ENCODE measurements at regions of chr2 and their contacts with region 1.

Region 1: DNA sequence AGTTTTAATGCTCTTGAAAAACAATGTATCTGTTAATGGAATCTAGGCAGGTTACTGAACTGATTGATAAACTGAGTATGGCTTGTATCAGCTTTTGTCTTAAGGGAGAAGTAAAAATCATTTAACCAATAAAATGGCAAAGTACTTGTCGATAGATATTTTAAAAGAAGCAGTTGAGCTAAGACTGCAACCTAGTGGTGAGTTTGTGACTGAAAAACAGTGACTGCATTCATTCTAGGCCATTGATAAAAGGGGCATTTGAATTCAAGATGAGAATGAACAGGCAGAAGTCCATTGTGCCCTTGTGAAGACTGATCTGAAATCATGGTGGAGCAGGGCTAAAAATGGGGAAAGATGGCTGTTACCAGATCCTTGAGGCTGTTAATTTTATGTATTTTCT is 59.4 kb upstream of the MSTN start:
- DNase-seq: peak; percentile 26
- CTCF ChIP-seq: peak; percentile 37

Region 2: DNA sequence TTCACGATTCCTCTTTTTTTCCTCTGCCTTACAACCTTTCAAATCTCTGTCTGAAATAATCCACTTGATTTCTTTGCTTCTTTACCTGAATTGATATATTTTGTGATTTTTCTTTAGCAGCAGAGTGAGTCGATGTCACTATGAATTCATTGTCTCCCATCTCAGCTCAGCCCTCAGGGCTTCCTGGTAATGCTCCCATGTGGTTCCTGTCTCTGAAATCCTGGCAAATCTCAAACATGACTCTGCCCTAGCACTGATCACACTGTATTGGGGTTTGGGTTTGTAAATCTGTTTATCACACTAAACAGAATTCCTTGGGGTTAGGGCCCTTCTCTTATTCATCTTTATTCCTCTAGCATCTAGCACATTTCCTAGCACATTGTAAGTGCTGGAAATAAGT is 16.4 kb before region 1 on chr2:
- CTCF ChIA-PET with region 1: no interaction called
- POLR2A ChIA-PET with region 1: no interaction called
- DNase-seq: no peak
- CTCF ChIP-seq: no peak

Region 3: DNA sequence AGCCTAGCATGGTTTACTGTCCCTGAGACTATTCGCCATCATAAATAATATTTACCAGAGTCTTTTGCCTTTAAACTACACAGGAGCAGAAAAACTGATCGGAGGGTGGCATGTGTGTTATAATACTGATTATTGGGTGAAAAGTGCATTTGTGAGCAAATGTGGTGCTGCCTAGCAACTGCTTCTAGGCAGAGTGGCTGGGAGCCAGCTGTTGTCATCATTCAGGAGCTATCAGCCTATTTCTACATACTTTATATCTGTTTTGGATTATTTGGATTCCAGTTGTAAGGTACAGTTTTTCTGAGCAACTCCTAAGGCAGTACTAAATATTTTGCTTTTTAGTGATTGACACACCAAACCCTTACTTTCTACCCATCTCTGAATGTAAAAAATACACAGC is 15.6 kb after region 1 on chr2:
- CTCF ChIA-PET with region 1: interaction called, 40 read pairs
- POLR2A ChIA-PET with region 1: no interaction called
- DNase-seq: no peak
- CTCF ChIP-seq: no peak

Measured in GM10248 (cell line).